Activated T-helper 2 cell treated with anti-CD3 and anti-CD28 coated beads, Interferon-gamma antibody, Interleukin-2, Interleukin-4, amounts not matched to agents 10 μg/mL and 5 μg/mL and 100 μg/mL, durations not matched to agents 14 hours and 24 hours and 36 hours (primary cell): ENCODE measurements at regions of chr11 and their contacts with region 1.

Region 1: GRCh38 chr11:73779084-73779902 is 8.4 kb upstream of the MRPL48 start:
- DNase-seq: peak; percentile 98
- H3K4me3 Mint-ChIP-seq: peak overlapping the region; percentile 79
- H3K27ac Mint-ChIP-seq: peak overlapping the region; percentile 92
- H3K4me1 Mint-ChIP-seq: peaks cover 9% of the 10 kb centered on the region
- H3K27me3 Mint-ChIP-seq: no peaks in the 10 kb centered on the region

Region 2: GRCh38 chr11:73597956-73598718 is 181.2 kb before region 1 on chr11 and contains the start of gene FAM168A:
- intact Hi-C with region 1: loop called (anchors 2 kb)
- DNase-seq: peak; percentile 89
- H3K4me3 Mint-ChIP-seq: peak within 1 kb of the TSS; percentile 95
- H3K27ac Mint-ChIP-seq: peak within 1 kb of the TSS; percentile 89
- H3K4me1 Mint-ChIP-seq: peaks cover 29% of the 10 kb centered on the region
- H3K27me3 Mint-ChIP-seq: no peaks in the 10 kb centered on the region
- total RNA-seq, gene FAM168A: 19.2 and 19.3 TPM in 2 replicates

Region 3: GRCh38 chr11:73760679-73761402 is 18.5 kb before region 1 on chr11 and contains the start of gene RAB6A:
- intact Hi-C with region 1: loop called (anchors 1 kb)
- DNase-seq: peak; percentile 100
- H3K4me3 Mint-ChIP-seq: peak within 1 kb of the TSS; percentile 93
- H3K27ac Mint-ChIP-seq: peak within 1 kb of the TSS; percentile 95
- H3K4me1 Mint-ChIP-seq: peaks cover 26% of the 10 kb centered on the region
- H3K27me3 Mint-ChIP-seq: peaks cover 5% of the 10 kb centered on the region
- total RNA-seq, gene RAB6A: 74.6 and 89.5 TPM in 2 replicates

Region 4: GRCh38 chr11:73876424-73877300 is 97.4 kb after region 1 on chr11 and contains the starts of genes COA4 and PAAF1:
- intact Hi-C with region 1: loop called (anchors 2 kb)
- DNase-seq: peak; percentile 93
- H3K4me3 Mint-ChIP-seq: peak within 1 kb of the TSS; percentile 98
- H3K27ac Mint-ChIP-seq: peak within 1 kb of the TSS; percentile 96
- H3K4me1 Mint-ChIP-seq: peaks cover 19% of the 10 kb centered on the region
- H3K27me3 Mint-ChIP-seq: no peaks in the 10 kb centered on the region
- total RNA-seq, gene COA4: 90.2 and 99.9 TPM in 2 replicates
- total RNA-seq, gene PAAF1: 25.4 and 28.7 TPM in 2 replicates